CD4-positive, alpha-beta T cell (primary cell): ENCODE measurements at regions of chr19 and their contacts with region 1.

Region 1: GRCh38 chr19:29714953-29715700 is at the start of gene C19orf12:
- DNase-seq: peak; percentile 29 to 75 (median 48)
- ATAC-seq: peak; percentile 54
- H3K4me3 ChIP-seq: peak within 1 kb of the TSS; percentile 69
- H3K4me3 Mint-ChIP-seq: peak within 1 kb of the TSS; percentile 91
- H3K27ac ChIP-seq: peak within 1 kb of the TSS; percentile 83 to 90
- H3K27ac Mint-ChIP-seq: peak within 1 kb of the TSS; percentile 89
- H3K4me1 ChIP-seq: peaks cover 62% of the 10 kb centered on the region
- H3K4me1 Mint-ChIP-seq: peaks cover 60% of the 10 kb centered on the region
- H3K27me3 ChIP-seq: no peaks in the 10 kb centered on the region
- H3K27me3 Mint-ChIP-seq: no peaks in the 10 kb centered on the region
- CTCF ChIP-seq: no peak
- total RNA-seq, gene C19orf12: 7.7 TPM

Region 2: DNA sequence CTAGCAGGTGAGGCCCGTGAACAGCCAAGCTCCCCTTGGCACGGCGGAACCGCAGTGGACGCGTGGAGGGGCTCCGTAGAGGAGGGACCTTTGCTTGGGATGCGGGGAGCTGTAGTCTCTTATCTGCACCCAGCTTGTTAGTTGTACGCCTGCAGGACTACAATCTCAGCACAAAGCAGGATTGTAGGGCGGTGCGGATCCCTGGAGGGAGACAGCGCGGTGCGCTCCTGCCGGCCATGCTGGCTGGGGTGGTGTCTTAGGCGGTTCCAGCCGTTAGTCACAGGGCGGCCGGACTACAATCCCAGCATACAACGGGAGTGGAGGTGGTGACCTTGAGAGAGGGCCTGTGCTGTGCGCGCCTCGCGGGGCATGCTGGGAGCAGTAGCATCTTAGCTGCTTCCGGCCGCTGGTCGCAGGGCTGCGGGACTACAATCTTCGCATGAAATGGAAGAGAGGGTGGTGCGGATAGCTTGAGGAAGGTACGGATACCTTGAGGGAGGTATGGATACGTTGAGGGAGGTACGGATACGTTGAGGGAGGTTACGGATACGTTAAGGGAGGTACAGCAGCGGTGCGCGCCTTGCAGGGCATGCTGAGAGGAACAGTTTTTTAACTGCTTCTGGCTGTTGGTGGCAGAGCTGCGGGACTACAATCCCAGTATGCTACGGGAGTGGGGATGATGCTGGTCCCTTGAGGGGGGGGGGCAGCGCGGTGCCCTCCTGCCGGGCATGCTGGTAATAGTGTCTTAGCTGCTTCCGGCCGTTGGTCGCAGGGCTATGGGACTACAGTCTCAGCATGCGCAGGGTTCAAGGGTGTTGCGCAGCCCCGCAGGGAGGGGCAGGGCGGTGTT is 1921.3 kb before region 1 on chr19:
- CTCF ChIA-PET with region 1: no interaction called
- POLR2A ChIA-PET with region 1: interaction called, 3 read pairs
- intact Hi-C with region 1: loop called in 1 of 2 experiments (anchors 10 kb)
- DNase-seq: peak; percentile 82 to 95 (median 88)
- ATAC-seq: peak; percentile 92
- H3K4me3 ChIP-seq: peak overlapping the region; percentile 93
- H3K4me3 Mint-ChIP-seq: peak overlapping the region; percentile 98
- H3K27ac ChIP-seq: peak overlapping the region; percentile 78 to 84
- H3K27ac Mint-ChIP-seq: peak overlapping the region; percentile 86
- H3K4me1 ChIP-seq: peaks cover 26% of the 10 kb centered on the region
- H3K4me1 Mint-ChIP-seq: peaks cover 31% of the 10 kb centered on the region
- H3K27me3 ChIP-seq: no peaks in the 10 kb centered on the region
- H3K27me3 Mint-ChIP-seq: no peaks in the 10 kb centered on the region
- CTCF ChIP-seq: no peak

Region 3: DNA sequence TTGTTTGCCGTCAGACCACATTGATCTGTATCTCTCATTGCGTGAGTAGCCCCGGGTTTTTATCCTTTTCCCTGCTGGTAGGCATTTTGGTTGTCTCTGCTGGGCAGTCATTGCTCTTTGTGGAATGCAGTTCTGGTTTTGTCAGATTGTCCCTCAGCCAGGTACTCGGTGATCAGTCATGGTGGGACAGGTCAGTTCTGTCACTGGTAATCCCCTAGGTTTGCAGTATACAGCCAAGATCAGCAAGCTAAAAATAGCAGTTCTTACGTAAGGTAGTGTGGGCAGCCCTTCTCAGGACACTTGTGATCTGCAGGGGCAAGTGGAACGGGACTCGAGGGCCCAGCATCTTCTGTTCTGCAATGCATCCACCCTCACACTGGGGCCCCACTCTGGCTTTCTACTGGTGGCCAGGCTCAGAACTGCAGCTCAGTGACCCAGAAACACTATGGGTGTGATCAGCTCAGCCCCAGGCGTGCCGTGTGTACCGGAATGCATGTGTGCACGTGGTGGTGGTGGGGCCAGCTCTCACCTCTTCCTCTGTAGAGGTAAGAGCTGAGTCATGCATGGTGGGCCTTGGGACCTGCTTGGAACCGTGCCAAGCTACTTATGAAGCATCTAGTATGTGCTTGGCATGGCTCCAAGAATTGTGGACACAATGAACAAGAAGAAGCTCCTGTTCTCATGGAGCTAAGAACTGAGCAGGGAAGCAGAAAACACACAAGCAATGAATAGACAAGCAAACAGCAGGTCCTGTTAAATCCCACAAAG is 43.5 kb before region 1 on chr19:
- CTCF ChIA-PET with region 1: interaction called, 37 read pairs
- POLR2A ChIA-PET with region 1: interaction called, 102 read pairs
- intact Hi-C with region 1: loop called in 1 of 2 experiments (anchors 2 kb)
- DNase-seq: peak; percentile 73 to 94 (median 89)
- ATAC-seq: peak; percentile 63
- H3K4me3 ChIP-seq: peak overlapping the region; percentile 30
- H3K4me3 Mint-ChIP-seq: peak overlapping the region; percentile 68
- H3K27ac ChIP-seq: peak overlapping the region; percentile 78 to 86
- H3K27ac Mint-ChIP-seq: peak overlapping the region; percentile 98
- H3K4me1 ChIP-seq: peaks cover 98% of the 10 kb centered on the region
- H3K4me1 Mint-ChIP-seq: peaks cover 88% of the 10 kb centered on the region
- H3K27me3 ChIP-seq: no peaks in the 10 kb centered on the region
- H3K27me3 Mint-ChIP-seq: no peaks in the 10 kb centered on the region
- CTCF ChIP-seq: peak; percentile 56

Region 4: DNA sequence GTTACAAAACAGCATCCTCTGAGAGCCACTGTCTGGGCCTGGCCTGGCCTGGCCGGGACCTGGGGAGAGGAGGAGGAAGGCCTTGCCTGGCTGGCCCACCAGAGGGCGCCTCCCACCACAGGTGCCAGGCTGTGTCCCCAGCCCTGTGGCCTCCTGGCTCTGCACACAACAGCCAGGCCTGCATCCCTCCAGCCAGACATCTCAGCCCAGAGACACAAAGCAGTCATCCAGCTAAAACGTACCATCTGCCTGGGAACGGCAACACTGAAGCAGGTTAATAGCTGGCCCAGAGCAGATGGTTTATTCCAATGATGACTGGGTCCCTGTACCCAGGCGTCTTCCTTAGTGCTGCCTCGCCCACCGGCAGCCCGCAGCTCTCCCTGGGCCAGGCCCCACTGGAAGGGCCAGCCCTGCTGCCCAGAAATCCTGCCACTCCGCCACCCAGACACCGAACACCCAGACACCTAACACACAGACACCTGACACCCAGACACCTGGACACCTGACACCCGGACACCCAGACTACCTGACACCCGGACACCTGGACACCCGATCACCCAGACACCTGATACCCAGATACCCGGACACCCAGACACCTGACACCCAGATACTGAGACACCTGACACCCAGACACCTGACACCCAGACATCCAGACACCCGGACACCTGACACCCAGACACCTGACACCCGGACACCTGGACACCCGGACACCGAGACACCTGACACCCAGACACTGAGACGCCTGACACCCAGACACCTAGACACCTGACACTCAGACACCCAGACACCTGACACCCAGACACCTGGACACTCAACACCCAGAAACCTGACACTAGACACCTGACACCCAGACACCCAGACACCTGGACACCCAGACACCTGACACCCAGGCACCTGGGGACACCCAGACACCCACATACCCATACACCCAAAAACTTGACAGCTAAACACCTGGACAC is 20.2 kb before region 1 on chr19:
- CTCF ChIA-PET with region 1: interaction called, 48 read pairs
- POLR2A ChIA-PET with region 1: interaction called, 75 read pairs
- intact Hi-C with region 1: loop called (anchors 1 kb)
- DNase-seq: peak; percentile 73 to 90 (median 80)
- ATAC-seq: peak; percentile 95
- H3K4me3 ChIP-seq: no peak overlapping the region
- H3K4me3 Mint-ChIP-seq: no peak overlapping the region
- H3K27ac ChIP-seq: no peak overlapping the region
- H3K27ac Mint-ChIP-seq: peak overlapping the region; percentile 61
- H3K4me1 ChIP-seq: peaks cover 24% of the 10 kb centered on the region
- H3K4me1 Mint-ChIP-seq: peaks cover 18% of the 10 kb centered on the region
- H3K27me3 ChIP-seq: no peaks in the 10 kb centered on the region
- H3K27me3 Mint-ChIP-seq: no peaks in the 10 kb centered on the region
- CTCF ChIP-seq: peak; percentile 92

Region 5: DNA sequence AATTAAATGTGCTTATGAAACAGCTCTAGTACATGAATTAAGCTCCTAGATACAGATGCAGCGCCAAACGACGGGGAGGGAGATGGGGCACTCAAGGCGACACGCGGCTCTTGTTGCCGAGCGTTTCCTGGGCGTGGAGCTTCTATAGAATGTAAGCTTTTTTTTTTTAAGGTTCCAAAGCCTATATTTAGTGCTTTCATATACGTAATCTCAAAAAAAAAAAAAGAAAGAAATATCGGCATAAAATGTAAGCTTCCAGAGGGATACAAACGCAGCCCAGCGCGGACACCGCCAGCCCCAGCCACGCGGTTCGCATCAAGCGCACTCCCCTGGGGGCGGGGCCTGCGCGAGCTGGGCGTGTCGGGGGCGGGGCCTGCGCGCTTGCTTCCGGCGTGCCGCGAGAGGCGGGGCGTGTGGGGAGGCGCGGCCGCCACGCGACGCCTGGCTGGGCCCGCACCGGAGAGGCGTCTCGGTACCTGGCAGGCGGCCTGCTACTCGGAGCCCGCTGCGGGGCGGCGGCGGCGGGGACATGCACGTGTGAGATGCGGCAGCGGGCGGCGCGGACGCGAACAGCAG is 226.8 kb after region 1 on chr19 and contains the start of gene URI1:
- CTCF ChIA-PET with region 1: interaction called, 4 read pairs
- POLR2A ChIA-PET with region 1: interaction called, 22 read pairs
- intact Hi-C with region 1: loop called in 1 of 2 experiments (anchors 5 kb)
- DNase-seq: peak; percentile 81 to 98 (median 93)
- ATAC-seq: peak; percentile 89
- H3K4me3 ChIP-seq: peak within 1 kb of the TSS; percentile 82
- H3K4me3 Mint-ChIP-seq: peak within 1 kb of the TSS; percentile 98
- H3K27ac ChIP-seq: peak within 1 kb of the TSS; percentile 12 to 67
- H3K27ac Mint-ChIP-seq: peak within 1 kb of the TSS; percentile 96
- H3K4me1 ChIP-seq: peaks cover 27% of the 10 kb centered on the region
- H3K4me1 Mint-ChIP-seq: peaks cover 53% of the 10 kb centered on the region
- H3K27me3 ChIP-seq: no peaks in the 10 kb centered on the region
- H3K27me3 Mint-ChIP-seq: no peaks in the 10 kb centered on the region
- CTCF ChIP-seq: no peak
- total RNA-seq, gene URI1: 50.9 to 63.6 TPM